Breast epithelium (tissue), 4 donors: ENCODE measurements at regions of chr15 and their contacts with region 1.

Region 1: GRCh38 chr15:57537072-57537471 is 54.6 kb upstream of the MYZAP start:
- DNase-seq: no peak
- H3K4me3 ChIP-seq: no peak overlapping the region
- H3K27ac ChIP-seq: no peak overlapping the region
- H3K4me1 ChIP-seq: no peaks in the 10 kb centered on the region
- H3K27me3 ChIP-seq: no peaks in the 10 kb centered on the region
- CTCF ChIP-seq: no peak
- POLR2A ChIP-seq: no peak

Region 2: GRCh38 chr15:57387564-57388076 is 149.5 kb before region 1 on chr15:
- intact Hi-C with region 1: no loop called
- DNase-seq: no peak
- H3K4me3 ChIP-seq: no peak overlapping the region
- H3K27ac ChIP-seq: peak overlapping the region; percentile 36 to 56
- H3K4me1 ChIP-seq: no peaks in the 10 kb centered on the region
- H3K27me3 ChIP-seq: no peaks in the 10 kb centered on the region
- CTCF ChIP-seq: no peak
- POLR2A ChIP-seq: no peak

Region 3: DNA sequence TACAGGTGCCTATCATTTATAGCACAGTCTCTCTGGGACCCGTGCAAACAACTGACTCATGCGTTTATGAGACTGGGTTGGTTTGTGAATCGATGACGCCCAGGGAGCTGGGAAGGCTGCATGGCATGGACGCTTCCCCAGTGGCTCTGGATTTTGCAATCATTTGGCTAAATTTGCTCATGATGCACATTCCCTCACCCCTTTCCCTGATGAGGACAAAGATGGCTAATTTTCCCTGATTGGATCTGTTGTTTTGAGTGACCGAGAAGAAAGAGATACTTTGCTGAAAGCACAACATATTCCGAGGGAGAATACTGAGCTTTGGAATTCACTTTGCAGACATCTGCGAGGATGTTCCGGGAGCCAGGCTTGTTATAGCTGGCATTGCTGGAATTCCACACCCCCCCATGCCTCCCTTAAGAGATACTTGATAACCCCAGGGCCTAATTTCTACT is 109.7 kb before region 1 on chr15:
- intact Hi-C with region 1: loop called (anchors 2 kb)
- DNase-seq: no peak
- H3K4me3 ChIP-seq: no peak overlapping the region
- H3K27ac ChIP-seq: peak overlapping the region; percentile 1 to 43
- H3K4me1 ChIP-seq: no peaks in the 10 kb centered on the region
- H3K27me3 ChIP-seq: no peaks in the 10 kb centered on the region
- CTCF ChIP-seq: no peak
- POLR2A ChIP-seq: no peak